ENCODE measurements at regions of chr20 and their contacts with region 1.

Region 1: GRCh38 chr20:13839421-13840092 is 54.7 kb downstream of the NDUFAF5 start:
- DNase-seq: no peak
- H3K4me3 ChIP-seq: no peak overlapping the region
- H3K27ac ChIP-seq: peak overlapping the region in 3 of 4 donors; percentile 47 to 61 (median 55)
- H3K4me1 ChIP-seq: no peaks in the 10 kb centered on the region
- H3K27me3 ChIP-seq: no peaks in the 10 kb centered on the region
- CTCF ChIP-seq: no peak
- EP300 ChIP-seq: no peak
- POLR2A ChIP-seq: no peak

Region 2: GRCh38 chr20:14055127-14055742 is 215.7 kb after region 1 on chr20:
- in situ Hi-C with region 1: loop called in 1 of 4 experiments (anchors 25 kb)
- intact Hi-C with region 1: no loop called
- DNase-seq: no peak
- H3K4me3 ChIP-seq: no peak overlapping the region
- H3K27ac ChIP-seq: no peak overlapping the region
- H3K4me1 ChIP-seq: peaks cover 0 to 6% (median 0%) of the 10 kb centered on the region in 4 donors
- H3K27me3 ChIP-seq: no peaks in the 10 kb centered on the region
- CTCF ChIP-seq: peak; percentile 44 to 63 (median 56)
- EP300 ChIP-seq: no peak
- POLR2A ChIP-seq: no peak